HEK293T (cell line): ENCODE measurements at regions of chr17 and their contacts with region 1.

Region 1: GRCh38 chr17:39199820-39200069 is 338 bp upstream of the RPL19 start:
- DNase-seq: peak; percentile 84

Region 2: GRCh38 chr17:38815576-38816193 is 384.1 kb before region 1 on chr17:
- CTCF ChIA-PET with region 1: no interaction called
- POLR2A ChIA-PET with region 1: no interaction called
- DNase-seq: no peak

Region 3: GRCh38 chr17:39080421-39081078 is 119.2 kb before region 1 on chr17:
- CTCF ChIA-PET with region 1: no interaction called
- POLR2A ChIA-PET with region 1: no interaction called
- DNase-seq: no peak

Region 4: DNA sequence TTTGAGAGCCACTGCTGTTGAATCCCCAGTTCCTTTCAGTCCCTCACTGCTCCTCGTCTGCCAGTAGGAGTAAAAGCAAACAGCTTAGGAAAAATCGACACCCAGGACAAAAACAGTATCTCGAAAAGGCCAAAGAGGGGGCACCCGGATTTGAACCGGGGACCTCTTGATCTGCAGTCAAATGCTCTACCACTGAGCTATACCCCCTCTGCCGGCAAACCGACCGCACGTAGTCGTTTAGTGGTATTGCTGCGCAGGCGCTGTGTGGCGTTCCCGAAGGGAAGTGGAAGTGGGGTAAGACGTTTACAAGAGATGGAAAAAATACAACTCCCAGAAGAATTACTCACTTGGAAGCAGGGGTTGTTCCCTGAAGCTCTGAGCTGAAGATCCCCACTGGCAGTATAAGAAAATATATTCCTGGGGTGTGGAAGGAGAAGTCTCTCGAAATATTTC is 46.1 kb before region 1 on chr17:
- CTCF ChIA-PET with region 1: interaction called, 13 read pairs
- POLR2A ChIA-PET with region 1: interaction called, 17 read pairs
- DNase-seq: peak; percentile 65

Region 5: GRCh38 chr17:39174907-39175694 is 24.6 kb before region 1 on chr17:
- CTCF ChIA-PET with region 1: interaction called, 13 read pairs
- POLR2A ChIA-PET with region 1: interaction called, 16 read pairs
- DNase-seq: peak; percentile 79

Region 6: GRCh38 chr17:39225959-39226683 is 26.4 kb after region 1 on chr17:
- CTCF ChIA-PET with region 1: interaction called, 4 read pairs
- POLR2A ChIA-PET with region 1: interaction called, 35 read pairs
- DNase-seq: peak; percentile 83

Region 7: DNA sequence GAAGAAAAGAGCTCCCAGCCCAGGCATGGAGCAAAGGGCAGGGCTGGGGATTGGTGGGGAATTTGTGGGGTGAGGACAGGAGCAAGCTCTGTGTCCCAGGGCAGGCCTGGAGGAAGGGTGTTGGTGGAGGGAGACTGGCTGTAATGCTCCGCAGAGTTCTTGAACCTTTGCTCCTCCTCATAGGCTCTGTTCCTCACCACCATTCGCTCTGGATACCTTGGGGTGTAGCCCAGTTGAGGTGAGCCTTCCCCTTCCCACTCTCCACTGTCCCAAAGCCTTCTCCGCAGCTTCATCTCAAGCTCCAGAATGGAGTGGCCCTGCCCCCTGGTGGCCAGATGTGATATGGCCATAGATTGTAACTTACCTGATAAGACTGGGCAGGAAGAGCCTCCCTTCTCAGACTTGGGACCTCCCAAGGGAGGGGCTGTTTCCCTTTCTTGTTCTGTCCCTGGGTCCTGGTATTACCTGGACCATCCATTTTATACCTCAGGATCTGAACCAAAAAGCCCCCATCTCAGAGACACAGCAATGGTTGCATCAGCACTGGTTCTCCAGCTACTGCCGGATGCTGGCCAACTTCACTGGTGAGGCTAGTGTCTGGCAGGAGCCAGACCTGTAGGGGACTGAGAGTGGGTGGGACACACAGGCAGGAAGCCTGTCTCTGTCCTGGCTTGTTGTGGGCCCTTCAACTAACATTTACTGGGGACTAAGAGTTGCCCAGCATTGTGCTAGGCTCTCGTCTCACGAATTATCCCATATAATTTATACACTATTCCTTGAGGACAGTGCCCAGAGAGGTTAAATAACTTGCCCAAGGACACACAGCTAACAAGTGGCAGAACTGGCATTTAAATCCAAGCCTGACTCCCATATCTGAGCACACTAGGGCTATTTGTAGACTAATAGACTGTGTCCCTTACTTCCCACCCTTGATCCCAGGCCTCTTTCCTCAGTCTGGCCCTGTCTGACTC is 45.1 kb after region 1 on chr17:
- CTCF ChIA-PET with region 1: interaction called, 96 read pairs
- POLR2A ChIA-PET with region 1: interaction called, 32 read pairs
- DNase-seq: peak; percentile 67

Region 8: DNA sequence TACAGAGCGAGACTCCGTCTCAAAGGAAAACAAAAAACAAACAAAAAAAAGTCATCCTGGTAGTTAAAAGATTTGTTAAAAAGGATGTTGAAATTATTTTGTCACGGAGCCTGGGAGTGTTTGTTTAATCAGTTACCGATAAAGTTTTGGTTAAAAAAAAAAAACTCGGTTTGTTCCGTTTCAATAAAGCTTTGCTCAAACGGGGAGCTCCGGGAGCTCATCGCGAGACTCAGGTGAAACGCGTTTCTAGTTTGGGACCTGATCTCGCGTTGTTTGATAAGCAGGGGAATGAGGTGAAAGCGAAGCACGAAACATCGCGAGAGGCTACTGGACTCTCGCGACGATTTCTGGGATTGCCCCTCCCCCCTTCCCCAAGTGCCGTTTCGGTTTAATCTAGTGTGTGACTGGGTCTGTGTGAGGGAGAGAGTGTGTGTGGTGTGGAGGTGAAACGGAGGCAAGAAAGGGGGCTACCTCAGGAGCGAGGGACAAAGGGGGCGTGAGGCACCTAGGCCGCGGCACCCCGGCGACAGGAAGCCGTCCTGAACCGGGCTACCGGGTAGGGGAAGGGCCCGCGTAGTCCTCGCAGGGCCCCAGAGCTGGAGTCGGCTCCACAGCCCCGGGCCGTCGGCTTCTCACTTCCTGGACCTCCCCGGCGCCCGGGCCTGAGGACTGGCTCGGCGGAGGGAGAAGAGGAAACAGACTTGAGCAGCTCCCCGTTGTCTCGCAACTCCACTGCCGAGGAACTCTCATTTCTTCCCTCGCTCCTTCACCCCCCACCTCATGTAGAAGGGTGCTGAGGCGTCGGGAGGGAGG is 261.6 kb after region 1 on chr17 and contains the start of gene CDK12:
- CTCF ChIA-PET with region 1: no interaction called
- POLR2A ChIA-PET with region 1: interaction called, 15 read pairs
- DNase-seq: peak; percentile 92